Spleen (tissue), 13 donors: ENCODE measurements at regions of chr1 and their contacts with region 1.

Region 1: GRCh38 chr1:147599362-147600118 is 58.2 kb downstream of the BCL9 start:
- DNase-seq: peak; percentile 99
- H3K4me3 ChIP-seq: peak overlapping the region; percentile 52 to 91 (median 79)
- H3K27ac ChIP-seq: peak overlapping the region; percentile 68 to 91 (median 84)
- H3K4me1 ChIP-seq: peaks cover 0 to 23% (median 19%) of the 10 kb centered on the region in 6 donors
- H3K27me3 ChIP-seq: peaks cover 0 to 20% (median 0%) of the 10 kb centered on the region in 7 donors
- CTCF ChIP-seq: peak in 1 of 11 experiments; percentile 38
- POLR2A ChIP-seq: peak in 1 of 3 donors; percentile 85

Region 2: DNA sequence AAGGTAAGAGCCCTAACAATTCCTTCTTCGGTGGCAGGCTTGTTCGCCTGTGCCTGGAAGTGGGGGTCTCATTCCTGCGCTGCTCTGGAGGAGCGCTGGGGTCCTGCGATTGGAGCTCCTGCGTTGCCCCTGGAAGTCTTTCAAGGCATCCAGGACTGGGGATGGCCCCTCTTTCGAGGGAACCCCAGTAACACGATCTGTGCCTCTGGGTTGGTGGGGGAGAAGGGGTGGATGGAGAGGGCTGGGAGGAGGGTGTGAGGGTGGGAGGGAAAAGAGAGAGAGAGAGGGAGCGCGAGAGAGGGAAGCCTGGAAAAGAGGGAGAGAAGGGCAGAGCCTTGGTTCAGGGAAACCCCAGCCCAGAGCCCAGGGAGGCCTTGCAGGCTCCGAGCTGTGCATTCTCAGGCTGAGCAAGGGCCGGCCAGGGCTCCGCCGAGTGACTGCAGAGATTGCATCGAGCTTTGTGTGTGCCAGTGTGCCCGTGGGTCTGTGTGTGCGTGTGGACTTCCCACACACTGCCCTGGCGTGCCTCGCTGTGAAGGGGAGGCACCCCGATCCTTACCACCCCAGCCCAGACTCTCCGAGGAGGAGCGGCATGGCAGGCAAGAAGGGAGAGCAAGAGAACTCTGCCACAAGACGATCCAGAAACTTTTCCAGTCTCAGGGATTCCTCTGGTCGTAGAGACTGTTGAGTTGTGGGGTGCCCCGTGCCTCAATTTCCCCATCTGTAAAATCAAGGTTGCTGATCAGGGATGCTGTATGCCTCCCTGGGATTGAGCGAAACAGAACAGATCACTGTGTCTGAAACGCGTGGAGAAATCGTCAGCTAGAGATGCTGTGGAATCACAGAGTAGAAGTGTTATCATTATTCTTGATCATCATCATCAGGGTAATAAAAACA is 57.6 kb before region 1 on chr1:
- intact Hi-C with region 1: loop called (anchors 5 kb)
- DNase-seq: peak; percentile 79
- H3K4me3 ChIP-seq: peak overlapping the region; percentile 32 to 69 (median 44)
- H3K27ac ChIP-seq: peak overlapping the region; percentile 46 to 83 (median 76)
- H3K4me1 ChIP-seq: peaks cover 14 to 63% (median 45%) of the 10 kb centered on the region in 6 donors
- H3K27me3 ChIP-seq: peaks cover 0 to 45% (median 0%) of the 10 kb centered on the region in 7 donors
- CTCF ChIP-seq: no peak
- POLR2A ChIP-seq: no peak

Region 3: GRCh38 chr1:147560756-147561471 is 38.6 kb before region 1 on chr1:
- intact Hi-C with region 1: no loop called
- DNase-seq: no peak
- H3K4me3 ChIP-seq: no peak overlapping the region
- H3K27ac ChIP-seq: no peak overlapping the region
- H3K4me1 ChIP-seq: no peaks in the 10 kb centered on the region
- H3K27me3 ChIP-seq: peaks cover 0 to 10% (median 0%) of the 10 kb centered on the region in 7 donors
- CTCF ChIP-seq: no peak
- POLR2A ChIP-seq: no peak